Right ventricle myocardium superior (tissue), 1 donor: ENCODE measurements at regions of chr14 and their contacts with region 1.

Region 1: DNA sequence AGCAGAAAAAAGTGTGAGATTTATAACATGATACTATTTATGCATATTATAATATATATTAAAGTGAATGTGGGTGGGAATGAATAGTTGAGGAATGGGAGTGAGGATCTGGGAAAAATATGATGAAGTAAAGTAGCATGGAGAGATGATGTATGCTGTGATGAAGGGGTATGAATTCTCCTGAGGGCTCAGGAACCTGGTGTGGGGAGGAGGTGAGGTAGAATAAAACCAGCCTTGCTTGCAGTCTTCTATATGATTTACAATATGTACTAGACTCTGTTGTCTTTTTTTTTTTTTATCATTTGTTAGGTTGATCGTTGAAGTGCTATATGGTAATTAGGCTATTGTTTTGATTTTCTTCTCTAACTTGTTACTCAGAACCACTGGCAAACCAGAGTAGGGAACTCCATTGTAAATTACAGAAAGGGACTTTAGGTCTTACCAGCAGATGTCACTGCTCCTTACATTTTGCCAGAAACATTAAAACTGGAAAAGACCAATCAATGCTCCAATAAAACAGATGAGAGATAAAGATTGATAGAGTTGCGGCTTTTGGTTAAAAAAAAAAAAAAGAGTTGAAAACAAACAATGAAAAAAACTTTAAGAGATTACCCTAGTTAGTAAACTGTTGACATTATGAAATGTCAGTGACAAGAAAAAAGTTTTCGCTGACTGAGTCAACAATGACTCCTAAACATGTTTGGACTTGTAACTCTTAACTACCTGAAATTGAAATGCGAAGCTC is 39.9 kb downstream of the ATL1 start:
- DNase-seq: no peak
- ATAC-seq: peak; percentile 61

Region 2: GRCh38 chr14:50667996-50668825 is 68.3 kb after region 1 on chr14 and contains the start of gene SAV1:
- intact Hi-C with region 1: no loop called
- DNase-seq: peak; percentile 91
- ATAC-seq: peak; percentile 97
- total RNA-seq, gene SAV1: 22.6 TPM

Region 3: DNA sequence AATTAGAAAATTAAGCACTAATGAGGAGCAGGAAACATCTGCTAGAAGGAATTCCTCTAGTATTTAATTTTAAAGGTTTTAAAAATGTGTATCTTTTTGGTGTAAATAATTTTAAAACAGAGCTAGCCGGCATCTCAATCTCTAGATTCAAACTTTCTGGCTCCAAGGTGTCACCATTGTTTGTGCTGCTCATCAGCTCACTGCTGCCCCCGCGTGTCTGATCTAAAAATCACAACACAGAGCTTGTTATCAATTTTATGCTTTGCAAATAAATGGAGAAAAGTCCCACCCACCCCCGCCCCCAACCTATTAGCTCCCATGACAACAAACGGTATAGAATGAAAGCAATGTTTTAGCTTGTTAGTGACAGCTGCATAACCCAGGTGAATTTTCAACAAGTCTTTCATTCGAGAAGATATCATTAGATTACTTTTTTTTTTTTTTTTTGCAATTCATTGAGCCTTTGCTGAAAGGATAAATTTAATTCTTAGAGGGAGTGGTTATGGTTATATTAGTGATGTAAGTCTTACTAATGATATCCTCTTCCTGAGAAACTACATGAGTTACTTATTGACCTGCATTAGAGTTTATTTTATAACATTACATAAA is 260.7 kb after region 1 on chr14:
- intact Hi-C with region 1: loop called (anchors 10 kb)
- DNase-seq: peak; percentile 85
- ATAC-seq: peak; percentile 92